ENCODE measurements at regions of chr4 and their contacts with region 1.

Region 1: DNA sequence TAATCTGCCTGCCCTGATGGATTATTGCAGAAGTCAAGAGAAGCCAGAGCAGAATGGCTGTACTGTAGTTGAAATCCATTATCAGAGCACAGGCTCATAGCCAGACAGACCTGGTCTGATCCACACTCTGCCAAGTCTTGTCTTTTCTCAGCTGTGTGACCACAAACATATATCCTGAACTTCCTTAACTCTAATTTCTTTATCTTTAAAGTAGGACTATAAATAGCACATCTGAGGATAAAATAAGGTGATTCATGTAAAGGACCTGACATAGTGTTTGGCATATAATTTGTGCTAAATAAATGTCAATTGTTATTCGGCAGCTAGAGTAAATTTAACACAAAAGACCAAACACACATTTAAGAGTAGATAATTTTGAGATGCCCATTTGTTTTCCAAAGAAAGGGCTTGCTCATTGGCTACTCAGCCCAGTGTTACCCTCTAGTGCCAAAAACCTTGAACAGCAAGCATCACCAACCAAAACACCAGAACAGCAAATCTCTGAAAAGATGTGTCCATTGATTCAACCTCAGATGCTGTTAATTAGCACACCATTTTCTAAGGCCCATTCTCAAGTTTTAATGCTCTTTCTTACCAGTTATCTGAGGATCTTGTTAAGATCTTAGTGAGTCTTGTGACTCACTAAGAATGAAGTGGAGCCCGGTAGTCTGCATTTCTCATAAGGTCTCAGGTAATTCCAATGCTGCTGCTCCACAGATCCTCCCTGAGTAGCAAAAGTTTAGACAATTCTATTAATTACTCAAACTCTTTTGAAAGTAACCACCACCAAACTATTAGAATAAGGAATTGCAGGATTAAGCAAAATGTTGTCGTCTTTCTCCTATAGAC is 108.8 kb downstream of the HHIP start:
- DNase-seq: peak in 1 of 10 donors; percentile 15
- H3K4me3 ChIP-seq: no peak overlapping the region
- H3K27ac ChIP-seq: peak overlapping the region in 6 of 59 donors; percentile 4 to 60 (median 20)
- H3K27me3 ChIP-seq: no peaks in the 10 kb centered on the region
- CTCF ChIP-seq: peak in 55 of 56 donors; percentile 24 to 78 (median 58)

Region 2: GRCh38 chr4:144583658-144584057 is 171.1 kb before region 1 on chr4:
- intact Hi-C with region 1: loop called in 1 of 2 experiments (anchors 10 kb)
- DNase-seq: no peak
- H3K4me3 ChIP-seq: peak overlapping the region in 16 of 59 donors; percentile 3 to 42 (median 23)
- H3K27ac ChIP-seq: no peak overlapping the region
- H3K27me3 ChIP-seq: no peaks in the 10 kb centered on the region
- CTCF ChIP-seq: no peak

Region 3: DNA sequence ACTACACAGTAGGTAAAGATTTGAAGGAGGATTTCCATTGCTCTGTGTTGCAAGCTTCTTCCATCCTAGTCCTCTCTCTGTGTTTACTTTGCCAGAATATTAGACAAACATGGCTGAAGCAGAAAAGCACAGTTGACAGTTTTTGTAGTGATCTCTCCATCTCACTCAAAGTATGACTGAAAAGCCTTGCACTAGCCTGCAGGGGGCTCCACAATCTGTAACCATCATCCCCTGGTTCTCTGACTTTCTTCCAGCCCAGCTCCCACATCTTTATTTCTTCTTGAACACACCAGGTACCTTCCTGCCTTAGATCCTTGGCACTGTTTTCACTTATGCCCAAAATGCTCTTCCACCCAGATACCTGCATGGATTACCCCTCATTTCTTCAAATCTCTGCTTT is 142.9 kb before region 1 on chr4:
- intact Hi-C with region 1: loop called in 1 of 2 experiments (anchors 10 kb)
- DNase-seq: peak in 4 of 10 donors; percentile 10 to 44 (median 22)
- H3K4me3 ChIP-seq: no peak overlapping the region
- H3K27ac ChIP-seq: no peak overlapping the region
- H3K27me3 ChIP-seq: no peaks in the 10 kb centered on the region
- CTCF ChIP-seq: peak in 54 of 56 donors; percentile 24 to 74 (median 50)